AG04449 (cell line): ENCODE measurements at regions of chr2 and their contacts with region 1.

Region 1: GRCh38 chr2:37877457-37878315 is 47.4 kb upstream of the RMDN2 start:
- DNase-seq: no peak
- H3K4me3 ChIP-seq: no peak overlapping the region
- CTCF ChIP-seq: peak; percentile 38

Region 2: GRCh38 chr2:37615804-37616676 is 261.6 kb before region 1 on chr2:
- CTCF ChIA-PET with region 1: interaction called, 10 read pairs
- POLR2A ChIA-PET with region 1: no interaction called
- DNase-seq: no peak
- H3K4me3 ChIP-seq: no peak overlapping the region
- CTCF ChIP-seq: no peak

Region 3: GRCh38 chr2:37653805-37654378 is 223.8 kb before region 1 on chr2:
- CTCF ChIA-PET with region 1: interaction called, 40 read pairs
- POLR2A ChIA-PET with region 1: interaction called, 4 read pairs
- DNase-seq: no peak
- H3K4me3 ChIP-seq: no peak overlapping the region
- CTCF ChIP-seq: no peak

Region 4: DNA sequence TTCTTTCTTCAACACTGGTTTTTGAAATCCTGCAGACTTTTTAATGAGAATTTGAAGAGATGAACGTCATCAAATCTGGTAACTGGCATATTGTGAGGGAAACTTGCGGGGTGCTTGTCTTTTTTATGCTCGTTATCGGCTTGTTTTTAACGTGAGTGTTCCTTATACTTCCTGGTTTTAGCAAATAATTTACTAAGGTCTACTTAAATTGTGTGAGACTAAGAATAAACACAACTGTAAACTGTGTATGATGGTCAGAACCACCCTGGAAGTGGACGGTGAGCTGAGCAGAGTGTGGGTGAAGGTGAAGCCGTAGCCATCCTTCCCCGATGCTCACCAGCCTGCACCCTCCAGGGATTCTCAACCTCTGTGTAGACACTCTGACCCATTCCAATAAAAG is 123.9 kb before region 1 on chr2:
- CTCF ChIA-PET with region 1: no interaction called
- POLR2A ChIA-PET with region 1: no interaction called
- DNase-seq: no peak
- H3K4me3 ChIP-seq: no peak overlapping the region
- CTCF ChIP-seq: no peak

Region 5: DNA sequence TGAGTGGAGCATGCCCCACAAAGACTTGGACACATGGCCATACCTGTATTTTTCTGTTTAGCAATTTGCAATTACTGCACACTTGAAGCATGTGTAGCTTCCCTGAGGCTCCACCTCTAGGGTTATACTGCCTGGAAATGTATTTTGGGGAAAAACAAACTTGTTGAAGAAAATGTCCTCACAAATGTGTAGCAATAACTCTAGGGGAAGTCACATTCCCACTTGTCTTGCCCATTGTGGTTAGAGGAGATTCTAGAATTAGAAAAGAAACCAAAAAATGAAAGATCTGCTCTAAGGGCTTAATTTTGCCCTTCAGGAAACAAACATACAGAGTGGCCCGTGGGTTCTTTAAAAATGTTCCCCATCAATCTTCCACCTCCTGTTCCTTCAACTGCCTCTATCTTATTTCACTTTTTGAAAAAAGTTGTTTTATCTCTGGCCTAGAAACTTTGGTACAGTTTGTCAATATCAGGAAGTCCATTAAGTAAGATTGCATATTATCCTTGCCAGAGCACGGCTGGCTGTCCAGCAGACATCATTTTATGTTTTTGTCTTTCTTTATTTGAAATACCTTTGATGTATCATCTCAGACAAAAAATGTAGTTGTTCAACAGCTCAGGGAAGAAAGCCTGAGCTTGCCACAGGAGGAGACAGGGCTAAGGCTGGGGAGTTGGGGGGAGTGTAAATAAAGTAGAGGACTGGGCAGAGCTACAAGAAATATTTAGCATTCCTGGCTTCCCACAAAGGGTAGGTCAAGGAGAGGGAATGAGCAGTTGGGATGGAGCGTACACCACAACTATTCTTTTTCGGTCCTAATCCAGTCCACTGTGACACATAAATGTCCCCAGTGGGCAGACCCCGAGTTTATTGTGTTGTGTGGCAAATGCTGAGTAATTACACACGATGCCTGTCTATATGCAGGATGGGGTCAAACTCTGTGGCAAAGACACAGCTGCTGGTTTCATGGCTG is 109.4 kb before region 1 on chr2:
- CTCF ChIA-PET with region 1: interaction called, 58 read pairs
- POLR2A ChIA-PET with region 1: no interaction called
- DNase-seq: peak; percentile 91
- H3K4me3 ChIP-seq: no peak overlapping the region
- CTCF ChIP-seq: no peak

Region 6: DNA sequence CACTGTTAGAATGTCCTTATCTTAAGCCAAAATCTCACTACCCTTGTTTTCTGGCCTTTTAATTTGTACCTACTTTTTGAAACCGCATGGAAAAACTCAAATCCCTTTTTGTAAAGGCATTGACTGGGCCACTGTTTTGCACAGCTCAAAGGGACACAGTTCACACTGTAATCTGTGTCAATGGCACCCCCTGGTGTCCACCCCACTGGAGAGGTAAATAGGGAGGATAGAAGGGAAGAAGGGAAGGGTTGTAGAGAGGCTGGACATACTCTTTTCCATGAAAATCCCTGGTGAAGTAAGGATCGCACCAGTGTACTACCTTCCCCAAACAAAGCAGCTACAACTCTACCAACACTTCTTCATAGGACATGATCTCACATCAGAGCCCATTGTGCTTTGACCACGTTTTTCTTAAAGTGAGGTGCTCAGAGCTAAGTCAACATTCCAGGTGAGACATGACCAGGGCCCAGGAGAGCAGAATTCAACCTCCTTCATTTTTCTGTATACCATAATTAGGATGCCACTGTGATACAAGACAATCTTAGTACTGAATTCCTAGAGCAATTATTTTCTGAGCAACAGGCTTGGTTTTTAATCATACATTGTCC is 45.0 kb before region 1 on chr2:
- CTCF ChIA-PET with region 1: interaction called, 141 read pairs
- POLR2A ChIA-PET with region 1: no interaction called
- DNase-seq: no peak
- H3K4me3 ChIP-seq: no peak overlapping the region
- CTCF ChIP-seq: peak; percentile 73

Region 7: GRCh38 chr2:37896314-37896713 is 18.6 kb after region 1 on chr2:
- CTCF ChIA-PET with region 1: interaction called, 79 read pairs
- POLR2A ChIA-PET with region 1: no interaction called
- DNase-seq: no peak
- H3K4me3 ChIP-seq: no peak overlapping the region
- CTCF ChIP-seq: no peak

Region 8: DNA sequence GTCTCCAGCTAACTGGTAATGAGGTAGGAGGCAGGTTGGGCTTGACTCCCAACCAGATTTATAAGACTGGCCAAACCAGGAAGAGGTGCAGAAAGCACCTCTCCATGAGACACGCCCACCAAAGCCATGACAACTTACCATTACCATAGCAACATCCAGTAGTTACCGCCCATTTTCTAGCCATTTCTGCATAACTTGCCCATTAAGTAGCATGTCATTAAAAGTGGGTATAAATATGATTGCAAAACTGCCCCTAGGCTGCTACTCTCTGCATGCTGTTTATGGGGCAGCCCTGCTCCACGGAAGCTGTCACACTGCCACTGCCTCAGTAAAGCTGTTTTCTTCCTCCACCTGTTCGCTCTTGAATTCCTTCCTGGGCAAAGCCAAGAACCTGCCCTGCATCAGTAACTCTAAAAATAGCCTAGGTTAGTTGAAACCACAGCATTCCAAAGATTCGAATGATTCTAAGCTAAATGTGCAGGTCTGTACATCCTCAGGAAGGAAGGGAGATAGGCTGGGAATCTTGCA is 367.5 kb after region 1 on chr2:
- CTCF ChIA-PET with region 1: no interaction called
- POLR2A ChIA-PET with region 1: no interaction called
- DNase-seq: no peak
- H3K4me3 ChIP-seq: no peak overlapping the region
- CTCF ChIP-seq: no peak